Activated CD4-positive, alpha-beta T cell treated with anti-CD3 and anti-CD28 coated beads, Interleukin-2, amount 10 ng/mL, durations not matched to agents 24 days and 14 days (primary cell): ENCODE measurements at regions of chr1 and their contacts with region 1.

Region 1: GRCh38 chr1:151839457-151840405 is at the start of gene C2CD4D:
- DNase-seq: peak; percentile 93
- H3K4me3 Mint-ChIP-seq: peak within 1 kb of the TSS; percentile 91
- H3K27ac Mint-ChIP-seq: peak within 1 kb of the TSS; percentile 89
- H3K4me1 Mint-ChIP-seq: peaks cover 49% of the 10 kb centered on the region
- H3K27me3 Mint-ChIP-seq: no peaks in the 10 kb centered on the region
- total RNA-seq, gene C2CD4D: 0.86 and 1.5 TPM in 2 replicates

Region 2: DNA sequence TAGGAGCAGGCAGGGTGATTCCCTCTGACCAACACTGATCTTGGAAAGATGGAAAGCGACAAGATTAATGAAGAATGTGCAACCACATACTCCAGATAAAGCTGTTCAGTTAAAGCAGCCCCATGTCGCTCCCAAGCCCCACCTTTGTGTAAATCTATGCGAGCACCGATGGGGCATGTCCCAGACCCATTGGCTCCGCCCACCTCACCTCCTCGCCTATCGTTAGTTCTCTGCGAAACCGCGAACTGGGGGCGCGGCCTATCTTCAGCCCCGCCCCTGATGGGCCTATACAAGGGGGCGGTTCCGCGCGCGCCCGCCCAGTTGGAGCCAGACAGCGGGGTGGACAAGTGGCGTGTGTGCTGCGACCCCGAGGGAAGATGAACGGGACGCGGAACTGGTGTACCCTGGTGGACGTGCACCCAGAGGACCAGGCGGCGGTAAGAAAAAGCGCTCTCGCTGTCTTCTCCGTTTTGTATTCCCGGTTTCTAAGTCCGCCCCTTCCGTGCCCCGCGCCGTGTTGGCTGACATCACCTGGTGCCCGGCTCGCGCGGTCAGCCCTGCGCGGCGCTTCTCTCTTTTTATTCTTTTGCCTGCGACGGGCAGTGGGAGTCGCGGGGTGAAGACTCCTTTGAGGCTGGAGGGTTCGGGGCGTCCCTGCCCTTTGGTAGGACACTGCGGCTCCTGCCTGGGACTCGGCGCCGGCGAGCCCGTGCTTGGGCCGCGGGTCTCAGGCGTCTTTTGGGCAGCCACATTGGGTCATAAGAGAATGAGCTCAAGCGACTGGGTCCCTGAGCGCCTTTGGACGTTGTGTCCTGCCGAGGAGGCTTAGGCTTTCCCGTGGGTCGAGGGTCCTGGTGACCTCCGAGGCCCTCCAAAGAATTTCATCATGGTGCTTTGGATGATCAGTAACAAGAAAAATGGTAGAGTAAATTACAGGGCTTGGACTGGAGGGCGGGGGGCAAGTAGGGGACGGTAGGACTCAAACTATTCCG is 299.4 kb before region 1 on chr1 and contains the start of gene TUFT1:
- intact Hi-C with region 1: loop called (anchors 2 kb)
- DNase-seq: peak; percentile 98
- H3K4me3 Mint-ChIP-seq: peak within 1 kb of the TSS; percentile 95
- H3K27ac Mint-ChIP-seq: peak within 1 kb of the TSS; percentile 79
- H3K4me1 Mint-ChIP-seq: peaks cover 19% of the 10 kb centered on the region
- H3K27me3 Mint-ChIP-seq: peaks cover 8% of the 10 kb centered on the region
- total RNA-seq, gene TUFT1: 1.7 and 2.1 TPM in 2 replicates

Region 3: DNA sequence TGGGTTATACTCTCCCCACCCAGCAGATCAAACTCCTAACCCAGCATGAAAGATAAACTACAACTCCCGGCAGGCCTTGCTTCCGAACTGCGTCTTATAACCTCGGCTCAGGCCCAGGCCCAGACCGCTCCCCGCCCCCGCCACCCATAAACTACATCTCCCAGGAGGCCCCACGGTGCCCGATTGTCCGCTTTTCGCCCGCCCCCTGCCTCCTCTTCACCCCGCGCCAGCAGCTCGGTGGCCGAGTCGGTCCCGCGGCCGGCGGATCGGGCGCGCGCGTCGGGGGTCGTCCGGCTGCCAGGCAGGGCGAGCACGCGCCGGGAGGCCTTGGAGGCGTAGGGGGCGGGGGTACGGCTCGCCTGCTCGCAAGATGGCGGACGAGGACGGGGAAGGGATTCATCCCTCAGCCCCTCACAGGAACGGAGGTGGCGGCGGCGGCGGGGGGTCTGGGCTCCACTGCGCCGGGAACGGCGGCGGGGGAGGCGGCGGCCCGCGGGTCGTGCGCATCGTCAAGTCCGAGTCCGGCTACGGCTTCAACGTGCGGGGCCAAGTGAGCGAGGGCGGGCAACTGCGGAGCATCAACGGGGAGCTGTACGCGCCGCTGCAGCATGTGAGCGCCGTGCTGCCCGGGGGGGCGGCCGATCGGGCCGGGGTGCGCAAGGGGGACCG is 227.8 kb before region 1 on chr1 and contains the start of gene SNX27:
- intact Hi-C with region 1: loop called (anchors 5 kb)
- DNase-seq: peak; percentile 95
- H3K4me3 Mint-ChIP-seq: peak within 1 kb of the TSS; percentile 93
- H3K27ac Mint-ChIP-seq: peak within 1 kb of the TSS; percentile 90
- H3K4me1 Mint-ChIP-seq: peaks cover 36% of the 10 kb centered on the region
- H3K27me3 Mint-ChIP-seq: peaks cover 9% of the 10 kb centered on the region
- total RNA-seq, gene SNX27: 31.6 and 33.1 TPM in 2 replicates

Region 4: DNA sequence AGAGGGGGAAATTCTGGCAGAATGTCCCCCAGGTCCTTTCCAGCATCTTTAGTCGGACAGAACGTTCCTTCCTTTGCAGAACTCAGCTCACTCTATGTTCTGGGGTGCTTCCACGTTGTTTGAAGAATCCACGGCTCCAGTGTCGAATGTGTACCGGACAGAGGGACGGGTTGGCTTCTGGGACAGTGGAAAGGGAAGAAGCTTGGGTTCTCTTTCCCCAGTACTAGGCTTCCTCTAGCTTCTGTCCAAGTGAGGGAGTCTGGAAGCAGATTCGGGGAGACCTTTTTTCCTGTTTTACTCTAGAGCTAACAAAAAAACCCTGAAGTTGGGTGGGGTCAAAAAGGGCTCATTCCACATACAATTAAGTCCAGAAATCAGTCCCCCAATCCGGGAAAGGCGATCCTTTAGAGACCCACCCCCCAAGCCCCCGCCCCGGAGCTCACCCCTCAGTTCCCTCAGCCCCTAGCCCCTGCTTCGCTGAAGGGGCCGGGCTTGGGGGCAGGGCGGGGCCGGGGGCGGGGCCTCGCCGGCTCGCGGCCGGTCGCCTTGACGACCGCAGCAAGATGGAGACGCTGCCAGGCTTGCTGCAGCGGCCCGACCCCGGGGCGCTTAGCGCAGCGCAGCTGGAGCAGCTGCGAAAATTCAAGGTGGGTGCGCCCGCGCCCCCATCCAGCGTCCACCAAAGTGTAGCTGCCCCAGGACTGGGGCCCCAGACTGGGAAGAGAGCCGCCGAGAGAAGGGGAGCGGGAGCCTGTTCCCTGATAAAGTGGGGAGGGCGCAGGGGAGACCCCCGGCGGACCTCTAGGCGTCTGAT is 118.5 kb before region 1 on chr1 and contains the start of gene RIIAD1:
- intact Hi-C with region 1: loop called (anchors 1 kb)
- DNase-seq: peak; percentile 82
- H3K4me3 Mint-ChIP-seq: peak within 1 kb of the TSS; percentile 85
- H3K27ac Mint-ChIP-seq: no peak within 1 kb of the TSS
- H3K4me1 Mint-ChIP-seq: peaks cover 24% of the 10 kb centered on the region
- H3K27me3 Mint-ChIP-seq: peaks cover 78% of the 10 kb centered on the region
- total RNA-seq, gene RIIAD1: not detected in 2 replicates

Region 5: GRCh38 chr1:151762941-151763921 is 76.5 kb before region 1 on chr1 and contains the start of gene MRPL9:
- intact Hi-C with region 1: loop called (anchors 1 kb)
- DNase-seq: peak; percentile 96
- H3K4me3 Mint-ChIP-seq: peak within 1 kb of the TSS; percentile 91
- H3K27ac Mint-ChIP-seq: peak within 1 kb of the TSS; percentile 90
- H3K4me1 Mint-ChIP-seq: peaks cover 22% of the 10 kb centered on the region
- H3K27me3 Mint-ChIP-seq: no peaks in the 10 kb centered on the region
- total RNA-seq, gene MRPL9: 136 TPM in 2 replicates

Region 6: GRCh38 chr1:151822404-151822803 is 17.3 kb before region 1 on chr1:
- intact Hi-C with region 1: loop called (anchors 2 kb)
- DNase-seq: peak; percentile 68
- H3K4me3 Mint-ChIP-seq: peak overlapping the region; percentile 42
- H3K27ac Mint-ChIP-seq: peak overlapping the region; percentile 72
- H3K4me1 Mint-ChIP-seq: peaks cover 49% of the 10 kb centered on the region
- H3K27me3 Mint-ChIP-seq: no peaks in the 10 kb centered on the region